K562 (cell line): ENCODE measurements at regions of chrX and their contacts with region 1.

Region 1: GRCh38 chrX:152915527-152916241 is 17.8 kb downstream of the ZNF185 start:
- DNase-seq: peak; percentile 57 to 73 (median 69)
- ATAC-seq: peak; percentile 91
- H3K4me3 ChIP-seq: no peak overlapping the region
- H3K27ac ChIP-seq: no peak overlapping the region
- H3K4me1 ChIP-seq: peaks cover 0 to 14% of the 10 kb centered on the region in 2 experiments; a peak in 2 of 5 replicates
- H3K27me3 ChIP-seq: peaks cover 0 to 20% of the 10 kb centered on the region in 2 experiments; a peak in 2 of 5 replicates
- CTCF ChIP-seq: peak; percentile 91 to 96 (median 94)
- EP300 ChIP-seq: no peak
- POLR2A ChIP-seq: no peak
- RAD21 ChIP-seq: peak; percentile 41 to 62

Region 2: GRCh38 chrX:151745651-151746050 is 1170.0 kb before region 1 on chrX:
- CTCF ChIA-PET with region 1: no interaction called
- POLR2A ChIA-PET with region 1: no interaction called
- in situ Hi-C with region 1: no loop called
- intact Hi-C with region 1: loop called (anchors 10 kb)
- DNase-seq: no peak
- ATAC-seq: no peak
- H3K4me3 ChIP-seq: no peak overlapping the region
- H3K27ac ChIP-seq: no peak overlapping the region
- H3K4me1 ChIP-seq: no peaks in the 10 kb centered on the region
- H3K27me3 ChIP-seq: peaks cover 2 to 22% of the 10 kb centered on the region in 2 experiments; a peak in 4 of 5 replicates
- CTCF ChIP-seq: no peak
- EP300 ChIP-seq: no peak
- POLR2A ChIP-seq: no peak
- RAD21 ChIP-seq: no peak

Region 3: DNA sequence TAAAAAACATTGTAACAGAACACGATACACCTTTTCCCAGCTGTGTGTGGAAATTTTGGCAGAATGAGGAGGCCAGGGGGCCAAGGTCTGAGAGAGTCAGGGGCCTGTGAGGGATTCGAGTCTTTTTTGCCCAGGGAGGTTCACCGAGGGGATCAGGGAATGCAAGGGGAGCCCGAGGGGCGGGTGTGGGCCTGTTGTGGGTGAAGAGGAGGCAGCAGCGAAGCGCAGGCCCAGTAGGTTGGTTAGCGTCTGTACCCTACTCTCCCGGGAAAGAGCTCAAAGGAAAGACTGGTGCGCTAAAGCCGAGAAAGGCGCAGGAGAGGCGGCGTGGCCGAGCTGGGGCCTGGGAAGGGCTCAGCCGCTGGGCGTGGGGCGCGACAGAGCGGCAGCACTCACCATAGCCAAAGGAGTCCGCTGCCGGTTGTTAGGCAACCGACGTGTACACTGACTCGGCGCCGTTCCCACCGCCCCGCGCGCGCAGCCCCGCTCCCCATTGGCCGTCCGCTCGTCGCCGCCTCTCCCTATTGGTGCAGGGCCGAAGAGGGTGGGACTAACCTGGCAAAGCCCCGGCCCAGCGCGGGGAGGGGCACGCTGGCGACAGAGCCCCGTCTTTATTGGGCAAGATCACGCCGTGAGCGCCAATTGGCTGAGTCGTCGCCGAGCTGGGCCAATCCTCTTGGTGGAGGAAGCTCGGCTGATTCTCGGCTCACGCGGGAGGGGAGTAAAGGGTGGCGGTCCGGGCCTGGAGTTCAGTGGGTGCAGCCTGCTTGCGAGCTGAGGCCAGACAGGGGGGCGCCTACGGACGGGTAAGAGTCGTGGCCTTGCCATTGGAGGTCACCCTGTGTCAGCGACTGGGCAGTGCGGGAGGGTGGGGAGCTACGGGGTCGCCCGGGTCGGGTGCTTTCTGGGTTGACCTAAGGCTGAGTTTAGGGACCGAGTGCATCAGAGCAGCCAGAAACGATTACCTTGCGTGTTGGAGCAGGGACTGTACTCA is 85.1 kb before region 1 on chrX and contains the starts of genes CETN2 and NSDHL:
- CTCF ChIA-PET with region 1: no interaction called
- POLR2A ChIA-PET with region 1: no interaction called
- in situ Hi-C with region 1: no loop called
- intact Hi-C with region 1: loop called (anchors 10 kb)
- DNase-seq: peak; percentile 97 to 99 (median 98)
- ATAC-seq: peak; percentile 99
- H3K4me3 ChIP-seq: peak within 1 kb of the TSS; percentile 62
- H3K27ac ChIP-seq: peak within 1 kb of the TSS; percentile 82
- H3K4me1 ChIP-seq: peaks cover 12 to 14% of the 10 kb centered on the region in 2 experiments; a peak in 4 of 5 replicates
- H3K27me3 ChIP-seq: no peaks in the 10 kb centered on the region
- CTCF ChIP-seq: no peak
- EP300 ChIP-seq: no peak
- POLR2A ChIP-seq: peak; percentile 83
- RAD21 ChIP-seq: no peak
- polyA plus RNA-seq, gene CETN2: 24.7 to 36.0 TPM
- polyA plus RNA-seq, gene NSDHL: 49.7 to 57.4 TPM